Natural killer cell (primary cell): ENCODE measurements at regions of chr15 and their contacts with region 1.

Region 1: DNA sequence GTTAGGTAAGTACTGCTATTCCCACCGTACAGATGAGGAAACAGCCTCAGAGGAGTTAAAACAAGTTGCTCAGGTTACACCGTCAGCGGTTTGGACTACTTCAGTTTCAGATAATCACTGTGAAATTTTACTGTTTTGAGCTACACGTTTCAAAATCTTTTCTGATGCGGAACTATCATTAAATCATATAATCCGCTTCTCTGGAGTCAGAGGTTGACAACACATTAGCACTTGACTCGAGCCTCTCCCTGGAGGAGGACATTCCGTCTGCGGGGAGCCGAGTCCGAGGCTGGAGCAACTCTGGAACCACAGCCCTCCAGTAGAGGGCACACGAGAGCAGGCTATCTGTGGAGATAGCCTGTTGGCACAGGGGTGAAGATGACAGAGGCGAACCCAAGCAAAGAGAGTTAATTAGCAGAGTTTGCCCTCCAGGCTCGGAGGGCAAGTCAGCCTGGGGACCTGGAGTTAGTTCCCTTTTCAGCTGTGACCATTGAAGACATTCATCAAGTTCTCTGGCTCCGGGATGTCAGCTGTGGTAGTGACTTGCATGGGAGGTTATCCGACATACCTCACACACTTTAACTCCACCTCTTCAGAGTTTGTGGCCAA is 131.2 kb downstream of the IGF1R start:
- DNase-seq: peak; percentile 71 to 85
- ATAC-seq: peak; percentile 90 to 94 (median 92)
- H3K4me3 ChIP-seq: no peak overlapping the region
- H3K4me3 Mint-ChIP-seq: no peak overlapping the region
- H3K27ac ChIP-seq: no peak overlapping the region
- H3K27ac Mint-ChIP-seq: peak overlapping the region; percentile 8 to 32
- H3K4me1 ChIP-seq: peaks cover 30% of the 10 kb centered on the region
- H3K4me1 Mint-ChIP-seq: peaks cover 24 to 30% of the 10 kb centered on the region in 2 donors
- H3K27me3 ChIP-seq: no peaks in the 10 kb centered on the region
- H3K27me3 Mint-ChIP-seq: no peaks in the 10 kb centered on the region
- CTCF ChIP-seq: peak; percentile 93

Region 2: GRCh38 chr15:98226578-98226977 is 553.0 kb before region 1 on chr15:
- intact Hi-C with region 1: no loop called
- DNase-seq: no peak
- ATAC-seq: no peak
- H3K4me3 ChIP-seq: no peak overlapping the region
- H3K4me3 Mint-ChIP-seq: no peak overlapping the region
- H3K27ac ChIP-seq: no peak overlapping the region
- H3K27ac Mint-ChIP-seq: no peak overlapping the region
- H3K4me1 ChIP-seq: no peaks in the 10 kb centered on the region
- H3K4me1 Mint-ChIP-seq: no peaks in the 10 kb centered on the region
- H3K27me3 ChIP-seq: no peaks in the 10 kb centered on the region
- H3K27me3 Mint-ChIP-seq: peaks cover 5 to 29% of the 10 kb centered on the region in 2 donors
- CTCF ChIP-seq: no peak

Region 3: DNA sequence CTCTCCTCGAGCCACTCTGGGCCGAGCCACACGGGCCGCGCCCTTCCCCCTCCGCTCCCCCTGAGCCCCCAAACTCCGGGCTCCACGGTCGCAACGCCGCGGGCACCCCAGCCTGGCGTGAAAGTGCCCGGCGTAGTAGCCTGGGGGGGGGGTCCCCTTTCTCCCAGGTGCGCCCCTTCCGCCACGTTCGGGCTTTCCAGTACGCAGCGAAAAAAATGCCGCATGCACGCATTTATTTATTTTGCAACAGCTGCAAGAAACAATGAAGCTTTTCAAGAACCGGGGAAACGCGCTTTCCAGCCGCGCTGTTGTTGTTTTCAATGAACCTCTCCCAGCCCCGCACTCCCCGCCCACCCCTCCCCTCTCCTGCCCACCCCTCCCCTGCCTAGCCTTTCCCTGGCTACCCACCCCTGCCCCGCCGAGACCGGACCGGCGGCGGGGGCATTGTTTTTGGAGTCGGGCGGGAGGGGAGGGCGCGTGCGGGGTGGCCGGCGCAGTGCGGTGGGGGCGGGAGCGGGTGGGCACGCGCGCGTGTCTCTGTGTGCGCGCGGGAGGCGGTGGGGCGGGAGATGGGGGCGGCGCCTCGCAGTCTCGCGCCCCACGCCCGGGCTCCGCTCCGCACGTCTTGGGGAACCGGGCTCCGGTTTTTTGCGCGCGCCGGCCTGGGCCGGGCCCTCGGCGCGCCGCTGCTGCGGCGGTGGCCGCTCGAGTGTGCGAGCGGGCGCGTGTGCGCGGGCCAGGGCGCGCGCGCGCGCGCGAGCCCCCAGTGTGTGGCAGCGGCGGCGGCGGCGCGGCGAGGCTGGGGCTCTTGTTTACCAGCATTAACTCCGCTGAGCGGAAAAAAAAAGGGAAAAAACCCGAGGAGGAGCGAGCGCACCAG is 131.6 kb before region 1 on chr15 and contains the start of gene IGF1R:
- intact Hi-C with region 1: loop called (anchors 5 kb)
- DNase-seq: peak; percentile 94 to 95
- ATAC-seq: peak; percentile 73 to 91 (median 79)
- H3K4me3 ChIP-seq: peak within 1 kb of the TSS; percentile 84
- H3K4me3 Mint-ChIP-seq: peak within 1 kb of the TSS; percentile 91
- H3K27ac ChIP-seq: peak within 1 kb of the TSS; percentile 53
- H3K27ac Mint-ChIP-seq: peak within 1 kb of the TSS; percentile 60 to 99
- H3K4me1 ChIP-seq: peaks cover 24% of the 10 kb centered on the region
- H3K4me1 Mint-ChIP-seq: peaks cover 28 to 35% of the 10 kb centered on the region in 2 donors
- H3K27me3 ChIP-seq: peaks cover 15% of the 10 kb centered on the region
- H3K27me3 Mint-ChIP-seq: peaks cover 33 to 36% of the 10 kb centered on the region in 2 donors
- CTCF ChIP-seq: no peak
- total RNA-seq, gene IGF1R: 47.3 to 50.7 (median 49.0) TPM

Region 4: DNA sequence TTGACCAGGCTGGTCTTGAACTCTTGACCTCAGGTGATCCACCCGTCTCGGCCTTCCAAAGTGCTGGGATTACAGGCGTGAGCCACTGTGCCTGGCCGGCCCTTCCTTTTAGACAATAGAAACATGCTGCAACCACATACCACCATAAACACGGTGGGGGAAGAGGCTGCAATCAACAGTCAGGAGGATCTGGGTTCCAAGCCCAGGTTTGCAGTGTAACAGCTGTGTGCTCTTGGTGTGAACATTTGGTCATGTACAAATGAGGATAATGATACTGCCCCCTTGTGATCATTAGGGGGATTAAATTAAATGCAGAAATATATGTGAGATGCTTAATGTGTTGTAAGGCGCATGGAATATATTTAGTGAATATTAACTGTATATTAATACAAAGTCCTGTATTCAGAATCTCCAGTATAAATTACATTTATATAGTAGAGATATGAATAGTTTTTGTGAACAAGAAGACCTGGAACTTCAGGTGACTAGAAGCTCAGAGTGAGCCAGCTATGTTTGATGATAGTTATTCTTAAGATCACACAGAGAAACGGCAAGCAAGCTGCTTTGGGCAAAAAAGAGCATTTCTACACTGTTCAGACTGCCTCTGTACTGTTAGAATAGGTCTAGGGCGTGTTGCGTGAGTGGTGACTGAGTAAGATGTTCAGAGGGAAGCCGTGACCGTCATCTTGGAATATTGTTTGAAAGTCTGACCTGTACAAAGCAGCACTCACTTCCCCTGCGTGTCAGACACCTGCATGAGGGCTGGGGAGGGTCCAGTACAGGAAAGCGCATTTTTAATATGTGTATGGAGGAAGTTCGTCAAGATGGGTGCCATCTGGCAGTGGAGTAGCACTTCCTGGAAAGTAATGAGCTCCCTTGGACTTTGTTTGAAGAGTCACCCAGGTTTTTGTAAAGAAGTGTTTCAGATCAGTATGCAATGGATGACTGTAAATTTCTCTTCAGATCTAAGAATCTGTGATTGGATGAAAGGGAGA is 102.3 kb after region 1 on chr15:
- intact Hi-C with region 1: loop called (anchors 1 kb)
- DNase-seq: peak in 1 of 2 donors; percentile 66
- ATAC-seq: peak; percentile 53 to 68 (median 64)
- H3K4me3 ChIP-seq: no peak overlapping the region
- H3K4me3 Mint-ChIP-seq: no peak overlapping the region
- H3K27ac ChIP-seq: no peak overlapping the region
- H3K27ac Mint-ChIP-seq: no peak overlapping the region
- H3K4me1 ChIP-seq: no peaks in the 10 kb centered on the region
- H3K4me1 Mint-ChIP-seq: peaks cover 7 to 13% of the 10 kb centered on the region in 2 donors
- H3K27me3 ChIP-seq: no peaks in the 10 kb centered on the region
- H3K27me3 Mint-ChIP-seq: no peaks in the 10 kb centered on the region
- CTCF ChIP-seq: peak; percentile 72

Region 5: GRCh38 chr15:98896802-98897732 is 117.5 kb after region 1 on chr15:
- intact Hi-C with region 1: no loop called
- DNase-seq: no peak
- ATAC-seq: no peak
- H3K4me3 ChIP-seq: no peak overlapping the region
- H3K4me3 Mint-ChIP-seq: no peak overlapping the region
- H3K27ac ChIP-seq: no peak overlapping the region
- H3K27ac Mint-ChIP-seq: no peak overlapping the region
- H3K4me1 ChIP-seq: no peaks in the 10 kb centered on the region
- H3K4me1 Mint-ChIP-seq: peaks cover 0 to 5% of the 10 kb centered on the region in 2 donors
- H3K27me3 ChIP-seq: no peaks in the 10 kb centered on the region
- H3K27me3 Mint-ChIP-seq: no peaks in the 10 kb centered on the region
- CTCF ChIP-seq: no peak

Region 6: DNA sequence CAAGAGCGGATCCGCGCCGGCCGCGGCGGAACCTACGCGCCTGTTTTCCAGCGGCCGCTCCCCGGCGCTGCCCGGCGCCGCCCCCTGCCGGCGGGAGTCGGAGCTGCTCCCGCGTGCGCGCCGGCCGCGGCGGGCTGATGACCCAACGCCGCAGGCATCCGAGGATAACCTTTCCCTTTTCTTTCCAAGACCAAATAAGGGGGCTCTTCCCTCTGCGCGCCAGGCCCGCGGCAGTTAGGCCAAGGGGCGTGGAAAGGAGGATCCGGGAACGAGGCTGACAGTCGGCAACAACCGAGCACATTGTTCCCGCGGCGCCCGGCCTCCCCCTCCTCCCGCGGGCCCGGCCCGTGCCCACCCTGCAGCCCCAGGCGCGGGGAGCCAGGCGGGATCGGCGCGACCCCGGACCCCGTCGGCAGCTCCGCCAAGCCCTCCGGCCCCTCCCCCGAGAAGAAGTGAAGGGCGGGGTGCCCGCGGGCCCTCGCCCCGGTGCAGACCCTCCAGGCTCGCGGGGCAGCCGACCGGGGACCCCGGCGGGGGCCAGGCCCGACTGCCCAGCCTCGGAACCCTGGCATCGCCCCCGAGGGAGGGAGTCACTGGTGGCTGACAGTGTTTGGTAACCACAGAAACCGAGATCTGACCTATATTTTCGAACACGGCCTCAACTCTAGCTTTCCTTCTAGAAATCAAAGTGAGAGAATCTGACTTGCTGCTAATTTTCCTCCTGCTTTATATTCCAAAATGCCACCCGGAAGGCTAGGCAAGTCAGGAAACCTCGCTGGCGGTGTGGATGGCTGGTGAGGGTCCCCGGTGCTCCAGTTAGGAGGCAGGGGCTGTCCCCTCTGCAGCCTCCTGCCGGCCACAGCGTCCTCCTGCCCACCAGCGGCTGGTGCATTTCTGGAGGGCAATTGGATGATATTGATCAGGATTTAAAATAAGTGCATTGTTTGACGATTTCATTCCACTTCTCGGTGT is 279.7 kb after region 1 on chr15:
- intact Hi-C with region 1: loop called (anchors 5 kb)
- DNase-seq: peak; percentile 62 to 70
- ATAC-seq: peak; percentile 73 to 95 (median 91)
- H3K4me3 ChIP-seq: peak overlapping the region; percentile 33
- H3K4me3 Mint-ChIP-seq: peak overlapping the region; percentile 81
- H3K27ac ChIP-seq: no peak overlapping the region
- H3K27ac Mint-ChIP-seq: no peak overlapping the region
- H3K4me1 ChIP-seq: peaks cover 12% of the 10 kb centered on the region
- H3K4me1 Mint-ChIP-seq: peaks cover 0 to 17% of the 10 kb centered on the region in 2 donors
- H3K27me3 ChIP-seq: peaks cover 8% of the 10 kb centered on the region
- H3K27me3 Mint-ChIP-seq: peaks cover 19 to 30% of the 10 kb centered on the region in 2 donors
- CTCF ChIP-seq: peak; percentile 73

Region 7: GRCh38 chr15:99076552-99077308 is 297.2 kb after region 1 on chr15:
- intact Hi-C with region 1: loop called (anchors 2 kb)
- DNase-seq: peak; percentile 21 to 80
- ATAC-seq: peak; percentile 71 to 92 (median 78)
- H3K4me3 ChIP-seq: peak overlapping the region; percentile 14
- H3K4me3 Mint-ChIP-seq: peak overlapping the region; percentile 77
- H3K27ac ChIP-seq: no peak overlapping the region
- H3K27ac Mint-ChIP-seq: peak overlapping the region in 1 of 2 donors; percentile 81
- H3K4me1 ChIP-seq: peaks cover 3% of the 10 kb centered on the region
- H3K4me1 Mint-ChIP-seq: peaks cover 9% of the 10 kb centered on the region in 2 donors
- H3K27me3 ChIP-seq: peaks cover 3% of the 10 kb centered on the region
- H3K27me3 Mint-ChIP-seq: peaks cover 13 to 29% of the 10 kb centered on the region in 2 donors
- CTCF ChIP-seq: peak; percentile 87